CD8-positive, alpha-beta T cell (primary cell): ENCODE measurements at regions of chr7 and their contacts with region 1.

Region 1: GRCh38 chr7:126236261-126236660 is 1016.5 kb downstream of the GRM8 start:
- DNase-seq: no peak
- ATAC-seq: no peak
- H3K4me3 ChIP-seq: no peak overlapping the region
- H3K4me3 Mint-ChIP-seq: no peak overlapping the region
- H3K27ac ChIP-seq: no peak overlapping the region
- H3K27ac Mint-ChIP-seq: no peak overlapping the region
- H3K4me1 ChIP-seq: no peaks in the 10 kb centered on the region
- H3K4me1 Mint-ChIP-seq: no peaks in the 10 kb centered on the region
- H3K27me3 ChIP-seq: no peaks in the 10 kb centered on the region
- H3K27me3 Mint-ChIP-seq: no peaks in the 10 kb centered on the region
- CTCF ChIP-seq: no peak

Region 2: DNA sequence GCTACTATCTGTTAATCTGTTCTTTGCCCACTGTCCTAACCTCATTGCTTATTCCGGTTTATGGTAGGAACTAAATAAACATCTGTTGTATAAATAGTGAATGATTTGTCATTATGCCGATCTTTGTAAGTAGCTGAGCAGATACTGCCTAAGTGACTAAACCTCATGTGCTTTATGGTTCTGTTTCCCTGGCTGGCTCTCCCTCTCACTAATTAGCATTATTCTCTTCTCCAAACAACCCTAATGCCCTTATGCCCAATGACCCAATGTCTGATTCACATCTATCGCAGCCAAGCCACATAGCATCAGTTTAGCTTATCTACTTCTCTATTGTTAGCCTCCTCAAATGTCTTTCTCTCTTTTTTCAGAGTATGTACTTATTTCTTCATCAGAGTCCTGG is 844.3 kb before region 1 on chr7:
- CTCF ChIA-PET with region 1: no interaction called
- POLR2A ChIA-PET with region 1: no interaction called
- intact Hi-C with region 1: no loop called
- DNase-seq: no peak
- ATAC-seq: no peak
- H3K4me3 ChIP-seq: no peak overlapping the region
- H3K4me3 Mint-ChIP-seq: no peak overlapping the region
- H3K27ac ChIP-seq: no peak overlapping the region
- H3K27ac Mint-ChIP-seq: no peak overlapping the region
- H3K4me1 ChIP-seq: no peaks in the 10 kb centered on the region
- H3K4me1 Mint-ChIP-seq: no peaks in the 10 kb centered on the region
- H3K27me3 ChIP-seq: no peaks in the 10 kb centered on the region
- H3K27me3 Mint-ChIP-seq: no peaks in the 10 kb centered on the region
- CTCF ChIP-seq: no peak

Region 3: GRCh38 chr7:125834421-125834820 is 401.8 kb before region 1 on chr7:
- CTCF ChIA-PET with region 1: no interaction called
- POLR2A ChIA-PET with region 1: no interaction called
- intact Hi-C with region 1: no loop called
- DNase-seq: no peak
- ATAC-seq: no peak
- H3K4me3 ChIP-seq: no peak overlapping the region
- H3K4me3 Mint-ChIP-seq: no peak overlapping the region
- H3K27ac ChIP-seq: no peak overlapping the region
- H3K27ac Mint-ChIP-seq: no peak overlapping the region
- H3K4me1 ChIP-seq: no peaks in the 10 kb centered on the region
- H3K4me1 Mint-ChIP-seq: no peaks in the 10 kb centered on the region
- H3K27me3 ChIP-seq: no peaks in the 10 kb centered on the region
- H3K27me3 Mint-ChIP-seq: no peaks in the 10 kb centered on the region
- CTCF ChIP-seq: no peak

Region 4: GRCh38 chr7:126210707-126211106 is 25.6 kb before region 1 on chr7:
- CTCF ChIA-PET with region 1: no interaction called
- POLR2A ChIA-PET with region 1: no interaction called
- intact Hi-C with region 1: loop called in 1 of 2 experiments (anchors 1 kb)
- DNase-seq: no peak
- ATAC-seq: no peak
- H3K4me3 ChIP-seq: no peak overlapping the region
- H3K4me3 Mint-ChIP-seq: no peak overlapping the region
- H3K27ac ChIP-seq: no peak overlapping the region
- H3K27ac Mint-ChIP-seq: no peak overlapping the region
- H3K4me1 ChIP-seq: no peaks in the 10 kb centered on the region
- H3K4me1 Mint-ChIP-seq: no peaks in the 10 kb centered on the region
- H3K27me3 ChIP-seq: no peaks in the 10 kb centered on the region
- H3K27me3 Mint-ChIP-seq: no peaks in the 10 kb centered on the region
- CTCF ChIP-seq: no peak

Region 5: DNA sequence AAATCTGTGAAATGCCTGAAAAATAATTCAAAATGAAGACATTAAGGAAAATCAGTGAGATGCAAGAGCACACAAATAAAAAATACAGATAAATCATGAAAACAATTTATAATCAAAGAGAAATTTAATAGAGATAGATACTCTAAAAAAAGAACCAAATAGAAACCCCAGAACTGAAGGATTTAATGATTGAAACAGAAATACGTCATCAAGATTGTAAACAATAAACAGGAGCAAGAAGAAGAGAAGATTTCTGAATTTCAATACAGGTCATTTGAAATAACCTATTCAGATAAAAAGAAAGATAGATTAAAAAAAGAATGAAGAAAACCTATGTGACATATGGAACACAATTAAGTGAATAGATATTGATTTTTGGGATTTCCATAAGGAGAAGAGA is 18.0 kb after region 1 on chr7:
- CTCF ChIA-PET with region 1: no interaction called
- POLR2A ChIA-PET with region 1: no interaction called
- intact Hi-C with region 1: no loop called
- DNase-seq: no peak
- ATAC-seq: no peak
- H3K4me3 ChIP-seq: no peak overlapping the region
- H3K4me3 Mint-ChIP-seq: no peak overlapping the region
- H3K27ac ChIP-seq: no peak overlapping the region
- H3K27ac Mint-ChIP-seq: no peak overlapping the region
- H3K4me1 ChIP-seq: no peaks in the 10 kb centered on the region
- H3K4me1 Mint-ChIP-seq: no peaks in the 10 kb centered on the region
- H3K27me3 ChIP-seq: no peaks in the 10 kb centered on the region
- H3K27me3 Mint-ChIP-seq: no peaks in the 10 kb centered on the region
- CTCF ChIP-seq: no peak